CD4-positive, alpha-beta T cell (primary cell): ENCODE measurements at regions of chr1 and their contacts with region 1.

Region 1: DNA sequence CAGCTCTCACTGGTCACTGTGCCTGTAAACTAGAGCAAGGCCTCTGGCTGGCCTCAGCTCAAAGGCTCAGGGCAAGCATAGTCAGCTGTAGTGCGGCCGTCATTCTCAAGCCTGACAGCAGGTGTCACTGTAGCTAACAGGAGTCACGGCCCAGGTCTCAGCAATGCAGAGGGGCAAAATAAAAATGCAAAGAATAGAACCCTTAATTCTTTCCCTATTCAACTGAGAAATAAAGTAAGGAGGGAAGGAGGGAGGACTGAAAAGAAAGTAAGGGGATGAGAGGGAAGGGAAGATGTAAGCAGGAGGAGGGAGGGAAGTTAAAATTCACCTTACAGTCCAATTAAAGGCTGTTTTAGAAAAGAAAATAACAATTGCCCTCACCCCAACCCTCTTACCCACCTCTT is 106.1 kb downstream of the KIAA0319L start:
- DNase-seq: peak; percentile 63 to 86 (median 76)
- ATAC-seq: peak; percentile 97
- H3K4me3 ChIP-seq: no peak overlapping the region
- H3K4me3 Mint-ChIP-seq: no peak overlapping the region
- H3K27ac ChIP-seq: peak overlapping the region in 1 of 2 donors; percentile 43
- H3K27ac Mint-ChIP-seq: peak overlapping the region; percentile 47
- H3K4me1 ChIP-seq: peaks cover 19% of the 10 kb centered on the region
- H3K4me1 Mint-ChIP-seq: peaks cover 36% of the 10 kb centered on the region
- H3K27me3 ChIP-seq: no peaks in the 10 kb centered on the region
- H3K27me3 Mint-ChIP-seq: no peaks in the 10 kb centered on the region
- CTCF ChIP-seq: peak; percentile 83

Region 2: GRCh38 chr1:35202048-35202719 is 248.9 kb before region 1 on chr1:
- CTCF ChIA-PET with region 1: no interaction called
- POLR2A ChIA-PET with region 1: interaction called, 3 read pairs
- intact Hi-C with region 1: loop called in 1 of 2 experiments (anchors 5 kb)
- DNase-seq: peak; percentile 49 to 87 (median 62)
- ATAC-seq: peak; percentile 100
- H3K4me3 ChIP-seq: no peak overlapping the region
- H3K4me3 Mint-ChIP-seq: no peak overlapping the region
- H3K27ac ChIP-seq: no peak overlapping the region
- H3K27ac Mint-ChIP-seq: no peak overlapping the region
- H3K4me1 ChIP-seq: no peaks in the 10 kb centered on the region
- H3K4me1 Mint-ChIP-seq: peaks cover 9% of the 10 kb centered on the region
- H3K27me3 ChIP-seq: no peaks in the 10 kb centered on the region
- H3K27me3 Mint-ChIP-seq: no peaks in the 10 kb centered on the region
- CTCF ChIP-seq: peak; percentile 88

Region 3: DNA sequence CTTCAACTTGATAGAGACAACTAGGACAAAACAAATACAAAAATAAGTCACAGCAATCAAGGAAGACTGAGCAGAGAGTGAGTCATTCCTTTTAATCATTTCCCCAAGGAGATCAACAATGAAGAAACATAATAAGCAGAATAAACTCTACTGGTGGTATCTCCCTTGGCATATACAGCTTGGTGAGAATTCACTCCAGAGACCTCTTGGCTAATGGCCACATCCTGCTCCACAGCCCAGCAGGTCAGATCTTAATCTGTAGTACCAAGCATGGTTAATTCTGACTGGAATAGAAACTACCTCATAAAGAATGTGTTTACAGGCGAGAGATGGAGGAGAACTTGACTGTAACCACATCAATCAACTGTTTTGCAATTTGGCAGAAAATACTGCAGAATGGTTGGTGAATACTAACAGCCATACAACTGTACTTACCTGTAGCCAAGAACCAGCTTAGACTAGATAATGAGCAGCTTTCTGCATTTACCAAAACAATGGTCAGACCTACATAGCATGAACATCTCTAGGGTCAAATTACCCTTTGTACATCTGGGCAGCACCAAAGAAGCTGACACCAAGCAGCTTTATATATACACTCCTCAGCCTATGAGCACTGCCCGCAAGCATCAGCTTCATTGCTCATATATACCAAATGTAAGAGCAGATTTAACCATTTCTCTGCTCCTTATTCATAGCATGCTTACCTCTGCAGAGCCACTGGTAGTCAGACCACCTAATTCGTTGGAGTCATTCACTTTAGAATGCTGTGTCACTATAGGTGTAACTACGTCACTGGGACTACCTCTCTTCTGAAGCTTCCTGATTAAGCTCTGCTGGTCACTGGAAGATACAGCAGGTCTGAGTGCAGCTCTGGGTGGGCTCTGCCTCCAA is 55.0 kb after region 1 on chr1:
- CTCF ChIA-PET with region 1: interaction called, 12 read pairs
- POLR2A ChIA-PET with region 1: interaction called, 33 read pairs
- intact Hi-C with region 1: loop called (anchors 2 to 5 kb)
- DNase-seq: peak; percentile 26 to 89 (median 40)
- ATAC-seq: peak; percentile 77
- H3K4me3 ChIP-seq: peak overlapping the region; percentile 24
- H3K4me3 Mint-ChIP-seq: peak overlapping the region; percentile 62
- H3K27ac ChIP-seq: peak overlapping the region; percentile 72 to 81
- H3K27ac Mint-ChIP-seq: peak overlapping the region; percentile 88
- H3K4me1 ChIP-seq: peaks cover 41% of the 10 kb centered on the region
- H3K4me1 Mint-ChIP-seq: peaks cover 82% of the 10 kb centered on the region
- H3K27me3 ChIP-seq: no peaks in the 10 kb centered on the region
- H3K27me3 Mint-ChIP-seq: no peaks in the 10 kb centered on the region
- CTCF ChIP-seq: no peak

Region 4: GRCh38 chr1:35544978-35545377 is 93.9 kb after region 1 on chr1:
- CTCF ChIA-PET with region 1: interaction called, 23 read pairs
- POLR2A ChIA-PET with region 1: interaction called, 19 read pairs
- intact Hi-C with region 1: loop called (anchors 1 kb)
- DNase-seq: peak in 13 of 14 experiments; percentile 30 to 85 (median 54)
- ATAC-seq: peak; percentile 81
- H3K4me3 ChIP-seq: no peak overlapping the region
- H3K4me3 Mint-ChIP-seq: no peak overlapping the region
- H3K27ac ChIP-seq: no peak overlapping the region
- H3K27ac Mint-ChIP-seq: peak overlapping the region; percentile 8
- H3K4me1 ChIP-seq: peaks cover 26% of the 10 kb centered on the region
- H3K4me1 Mint-ChIP-seq: peaks cover 67% of the 10 kb centered on the region
- H3K27me3 ChIP-seq: no peaks in the 10 kb centered on the region
- H3K27me3 Mint-ChIP-seq: no peaks in the 10 kb centered on the region
- CTCF ChIP-seq: peak; percentile 63

Region 5: GRCh38 chr1:35564037-35564883 is 113.1 kb after region 1 on chr1:
- CTCF ChIA-PET with region 1: interaction called, 41 read pairs
- POLR2A ChIA-PET with region 1: interaction called, 17 read pairs
- intact Hi-C with region 1: loop called (anchors 1 kb)
- DNase-seq: peak; percentile 67 to 89 (median 78)
- ATAC-seq: peak; percentile 72
- H3K4me3 ChIP-seq: no peak overlapping the region
- H3K4me3 Mint-ChIP-seq: peak overlapping the region; percentile 50
- H3K27ac ChIP-seq: no peak overlapping the region
- H3K27ac Mint-ChIP-seq: peak overlapping the region; percentile 62
- H3K4me1 ChIP-seq: peaks cover 30% of the 10 kb centered on the region
- H3K4me1 Mint-ChIP-seq: peaks cover 32% of the 10 kb centered on the region
- H3K27me3 ChIP-seq: no peaks in the 10 kb centered on the region
- H3K27me3 Mint-ChIP-seq: no peaks in the 10 kb centered on the region
- CTCF ChIP-seq: peak; percentile 80

Region 6: GRCh38 chr1:35726450-35727433 is 275.6 kb after region 1 on chr1:
- CTCF ChIA-PET with region 1: interaction called, 8 read pairs
- POLR2A ChIA-PET with region 1: no interaction called
- intact Hi-C with region 1: loop called in 1 of 2 experiments (anchors 5 kb)
- DNase-seq: peak; percentile 20 to 81 (median 37)
- ATAC-seq: peak; percentile 92
- H3K4me3 ChIP-seq: no peak overlapping the region
- H3K4me3 Mint-ChIP-seq: no peak overlapping the region
- H3K27ac ChIP-seq: no peak overlapping the region
- H3K27ac Mint-ChIP-seq: no peak overlapping the region
- H3K4me1 ChIP-seq: peaks cover 7% of the 10 kb centered on the region
- H3K4me1 Mint-ChIP-seq: peaks cover 7% of the 10 kb centered on the region
- H3K27me3 ChIP-seq: no peaks in the 10 kb centered on the region
- H3K27me3 Mint-ChIP-seq: no peaks in the 10 kb centered on the region
- CTCF ChIP-seq: peak; percentile 83